Vagina (tissue), 2 donors: ENCODE measurements at regions of chr7 and their contacts with region 1.

Region 1: GRCh38 chr7:142308326-142308725 is 50.5 kb upstream of the PRSS58 start:
- DNase-seq: no peak
- H3K4me3 ChIP-seq: no peak overlapping the region
- H3K27ac ChIP-seq: no peak overlapping the region
- H3K4me1 ChIP-seq: no peaks in the 10 kb centered on the region
- H3K27me3 ChIP-seq: no peaks in the 10 kb centered on the region
- CTCF ChIP-seq: no peak
- POLR2A ChIP-seq: no peak

Region 2: GRCh38 chr7:142345811-142346210 is 37.5 kb after region 1 on chr7:
- intact Hi-C with region 1: loop called (anchors 2 kb)
- DNase-seq: no peak
- H3K4me3 ChIP-seq: no peak overlapping the region
- H3K27ac ChIP-seq: no peak overlapping the region
- H3K4me1 ChIP-seq: no peaks in the 10 kb centered on the region
- H3K27me3 ChIP-seq: no peaks in the 10 kb centered on the region
- CTCF ChIP-seq: no peak
- POLR2A ChIP-seq: no peak

Region 3: GRCh38 chr7:143487566-143487965 is 1179.2 kb after region 1 on chr7:
- intact Hi-C with region 1: no loop called
- DNase-seq: no peak
- H3K4me3 ChIP-seq: no peak overlapping the region
- H3K27ac ChIP-seq: peak overlapping the region; percentile 60
- H3K4me1 ChIP-seq: peaks cover 13% of the 10 kb centered on the region
- H3K27me3 ChIP-seq: no peaks in the 10 kb centered on the region
- CTCF ChIP-seq: no peak
- POLR2A ChIP-seq: no peak